Posterior vena cava (tissue), 2 donors: ENCODE measurements at regions of chr19 and their contacts with region 1.

Region 1: DNA sequence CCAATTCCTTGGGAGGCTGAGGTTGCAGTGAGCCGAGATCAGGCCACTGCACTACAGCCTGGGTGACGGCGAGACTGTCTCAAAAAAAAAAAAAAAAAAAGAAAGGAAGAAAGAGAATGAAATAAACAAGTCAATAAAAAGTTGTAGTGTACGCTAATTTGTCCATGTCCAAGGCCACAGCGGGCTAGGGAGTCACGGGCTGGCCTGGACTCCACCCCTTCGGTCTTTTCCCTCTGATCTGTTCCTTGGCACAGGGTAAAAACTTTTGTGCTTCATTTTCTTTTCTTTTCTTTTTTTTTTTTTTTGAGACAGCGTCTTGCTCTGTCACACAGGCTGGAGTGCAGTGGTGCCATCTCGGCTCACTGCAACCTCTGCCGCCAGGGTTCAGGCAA is 19.4 kb upstream of the MKNK2 start:
- DNase-seq: peak; percentile 79

Region 2: GRCh38 chr19:1905071-1905862 is 165.2 kb before region 1 on chr19 and contains the starts of genes ADAT3 and SCAMP4:
- intact Hi-C with region 1: no loop called
- DNase-seq: peak; percentile 100
- total RNA-seq, gene ADAT3: 3.0 to 3.6 TPM
- total RNA-seq, gene SCAMP4: 35.6 to 36.6 TPM

Region 3: DNA sequence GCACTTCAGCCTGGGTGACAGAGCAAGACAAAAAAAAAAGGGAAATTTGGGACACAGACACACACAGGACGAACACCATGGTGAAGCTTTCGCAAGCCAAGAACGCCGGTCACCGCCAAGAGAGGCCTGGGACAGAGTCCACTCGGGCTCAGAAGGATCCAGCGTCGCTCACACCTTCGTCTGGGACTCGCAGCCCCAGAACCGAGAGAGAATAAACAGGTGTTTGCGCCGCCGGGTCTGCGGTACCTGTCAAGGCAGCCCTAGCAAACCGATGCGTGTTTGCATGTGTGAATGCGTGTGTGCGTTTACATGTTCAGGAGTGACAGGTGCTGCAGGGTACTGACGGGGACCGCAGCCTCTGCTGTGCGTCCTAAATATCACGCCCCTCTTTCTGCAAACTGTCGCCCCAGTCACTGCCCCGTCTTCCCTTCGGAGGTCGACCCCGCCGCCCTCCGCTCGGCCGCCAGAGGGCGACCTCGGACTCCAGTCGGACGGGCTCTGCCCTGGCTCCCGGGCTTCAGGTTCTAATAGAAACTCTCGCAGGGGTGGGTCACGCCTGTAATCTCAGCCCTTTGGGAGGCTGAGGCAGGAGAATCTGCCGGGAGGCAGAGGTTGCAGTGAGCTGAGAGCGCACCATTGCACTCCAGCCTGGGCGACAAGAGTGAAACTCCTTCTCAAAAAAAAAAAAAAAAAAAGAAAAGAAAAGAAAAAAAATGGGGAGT is 141.2 kb before region 1 on chr19:
- intact Hi-C with region 1: loop called in 1 of 2 experiments (anchors 10 kb)
- DNase-seq: peak; percentile 95

Region 4: DNA sequence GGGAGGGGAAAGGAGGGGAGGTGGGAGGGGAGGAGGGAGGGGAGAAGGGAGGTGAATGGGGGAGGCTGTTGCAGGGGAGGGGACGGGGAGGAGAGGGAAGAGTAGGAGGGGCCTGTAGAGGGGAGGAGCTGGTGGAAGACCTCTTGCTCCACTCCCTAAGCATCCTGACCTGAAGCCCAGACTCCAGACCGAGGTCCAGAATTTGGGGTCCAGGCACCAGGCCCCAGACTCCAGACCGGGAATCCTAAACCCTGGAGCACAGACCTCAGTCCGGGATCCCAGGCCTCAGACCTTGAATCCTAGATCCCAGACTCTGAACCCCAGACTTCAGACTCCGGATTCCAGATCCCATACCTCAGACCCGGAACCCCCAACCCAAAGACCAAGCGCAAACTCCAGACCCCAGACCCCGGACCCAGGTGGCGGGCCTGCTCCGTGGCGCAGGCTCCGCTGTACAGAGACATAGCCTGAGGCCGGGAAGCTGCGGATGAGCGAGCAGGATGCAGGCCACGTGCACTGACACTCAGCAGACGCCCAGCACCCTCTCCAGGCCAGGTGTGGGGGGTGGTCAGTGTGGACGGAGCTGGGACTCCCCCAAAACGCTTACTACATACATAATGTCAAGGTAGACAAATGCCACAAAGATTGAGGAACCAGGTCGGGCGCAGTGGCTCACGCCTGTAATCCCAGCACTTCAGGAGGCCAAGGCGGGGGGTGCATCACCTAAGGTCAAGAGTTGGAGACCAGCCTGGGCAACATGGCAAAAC is 54.2 kb before region 1 on chr19:
- intact Hi-C with region 1: loop called in 1 of 2 experiments (anchors 5 kb)
- DNase-seq: peak; percentile 87

Region 5: GRCh38 chr19:2123682-2124387 is 53.4 kb after region 1 on chr19:
- intact Hi-C with region 1: loop called in 1 of 2 experiments (anchors 2 kb)
- DNase-seq: no peak